ENCODE measurements at regions of chr14 and their contacts with region 1.

Region 1: GRCh38 chr14:104137297-104138097 is 890 bp upstream of the KIF26A start:
- DNase-seq: peak; percentile 63
- H3K4me3 Mint-ChIP-seq: peak overlapping the region; percentile 19
- H3K27ac Mint-ChIP-seq: no peak overlapping the region
- H3K4me1 Mint-ChIP-seq: peaks cover 9% of the 10 kb centered on the region
- H3K27me3 Mint-ChIP-seq: peaks cover 25% of the 10 kb centered on the region

Region 2: GRCh38 chr14:104224506-104225277 is 87.2 kb after region 1 on chr14:
- CTCF ChIA-PET with region 1: no interaction called
- intact Hi-C with region 1: loop called (anchors 5 kb)
- DNase-seq: peak; percentile 54
- H3K4me3 Mint-ChIP-seq: no peak overlapping the region
- H3K27ac Mint-ChIP-seq: no peak overlapping the region
- H3K4me1 Mint-ChIP-seq: peaks cover 26% of the 10 kb centered on the region
- H3K27me3 Mint-ChIP-seq: peaks cover 7% of the 10 kb centered on the region

Region 3: GRCh38 chr14:104460791-104461651 is 323.5 kb after region 1 on chr14:
- CTCF ChIA-PET with region 1: no interaction called
- intact Hi-C with region 1: loop called (anchors 10 kb)
- DNase-seq: no peak
- H3K4me3 Mint-ChIP-seq: no peak overlapping the region
- H3K27ac Mint-ChIP-seq: no peak overlapping the region
- H3K4me1 Mint-ChIP-seq: peaks cover 5% of the 10 kb centered on the region
- H3K27me3 Mint-ChIP-seq: peaks cover 40% of the 10 kb centered on the region

Region 4: GRCh38 chr14:104563742-104564615 is 426.5 kb after region 1 on chr14:
- CTCF ChIA-PET with region 1: no interaction called
- intact Hi-C with region 1: loop called (anchors 1 kb)
- DNase-seq: peak; percentile 80
- H3K4me3 Mint-ChIP-seq: no peak overlapping the region
- H3K27ac Mint-ChIP-seq: no peak overlapping the region
- H3K4me1 Mint-ChIP-seq: peaks cover 3% of the 10 kb centered on the region
- H3K27me3 Mint-ChIP-seq: peaks cover 14% of the 10 kb centered on the region

Region 5: GRCh38 chr14:104639889-104640548 is 502.5 kb after region 1 on chr14:
- CTCF ChIA-PET with region 1: no interaction called
- intact Hi-C with region 1: loop called (anchors 2 kb)
- DNase-seq: peak; percentile 59
- H3K4me3 Mint-ChIP-seq: no peak overlapping the region
- H3K27ac Mint-ChIP-seq: no peak overlapping the region
- H3K4me1 Mint-ChIP-seq: no peaks in the 10 kb centered on the region
- H3K27me3 Mint-ChIP-seq: peaks cover 8% of the 10 kb centered on the region

Measured in activated naive CD4-positive, alpha-beta T cell treated with anti-CD3 and anti-CD28 coated beads for 36 hours (primary cell).